T-cell (primary cell): ENCODE measurements at regions of chr9 and their contacts with region 1.

Region 1: GRCh38 chr9:93464395-93464794 is 11.0 kb upstream of the FAM120AOS start:
- DNase-seq: no peak
- ATAC-seq: peak in 1 of 4 experiments; percentile 35
- H3K4me3 ChIP-seq: no peak overlapping the region
- H3K4me3 Mint-ChIP-seq: peak overlapping the region; percentile 2 to 28 (median 22)
- H3K27ac ChIP-seq: peak overlapping the region; percentile 27
- H3K27ac Mint-ChIP-seq: peak overlapping the region; percentile 73 to 80
- H3K4me1 ChIP-seq: peaks cover 40 to 44% of the 10 kb centered on the region in 2 experiments
- H3K4me1 Mint-ChIP-seq: peaks cover 90 to 91% (median 90%) of the 10 kb centered on the region in 3 donors
- H3K27me3 ChIP-seq: no peaks in the 10 kb centered on the region
- H3K27me3 Mint-ChIP-seq: no peaks in the 10 kb centered on the region

Region 2: GRCh38 chr9:93453047-93453914 is 11.1 kb before region 1 on chr9 and contains the start of gene FAM120AOS:
- CTCF ChIA-PET with region 1: interaction called, 5 to 12 read pairs
- POLR2A ChIA-PET with region 1: interaction called, 4 read pairs
- DNase-seq: peak; percentile 54 to 93 (median 79)
- ATAC-seq: peak; percentile 63 to 77 (median 69)
- H3K4me3 ChIP-seq: peak within 1 kb of the TSS; percentile 80 to 94
- H3K4me3 Mint-ChIP-seq: peak within 1 kb of the TSS; percentile 88 to 94 (median 90)
- H3K27ac ChIP-seq: peak within 1 kb of the TSS; percentile 70
- H3K27ac Mint-ChIP-seq: peak within 1 kb of the TSS; percentile 93 to 96
- H3K4me1 ChIP-seq: peaks cover 36 to 38% of the 10 kb centered on the region in 2 experiments
- H3K4me1 Mint-ChIP-seq: peaks cover 56 to 71% (median 61%) of the 10 kb centered on the region in 3 donors
- H3K27me3 ChIP-seq: no peaks in the 10 kb centered on the region
- H3K27me3 Mint-ChIP-seq: no peaks in the 10 kb centered on the region
- total RNA-seq, gene FAM120AOS: 35.7 to 44.0 (median 41.4) TPM

Region 3: GRCh38 chr9:93978551-93978950 is 514.2 kb after region 1 on chr9:
- CTCF ChIA-PET with region 1: no interaction called
- POLR2A ChIA-PET with region 1: no interaction called
- DNase-seq: no peak
- ATAC-seq: no peak
- H3K4me3 ChIP-seq: no peak overlapping the region
- H3K4me3 Mint-ChIP-seq: no peak overlapping the region
- H3K27ac ChIP-seq: no peak overlapping the region
- H3K27ac Mint-ChIP-seq: no peak overlapping the region
- H3K4me1 ChIP-seq: no peaks in the 10 kb centered on the region
- H3K4me1 Mint-ChIP-seq: no peaks in the 10 kb centered on the region
- H3K27me3 ChIP-seq: peaks cover 0 to 35% of the 10 kb centered on the region in 2 experiments
- H3K27me3 Mint-ChIP-seq: peaks cover 35 to 44% of the 10 kb centered on the region in 2 donors